ENCODE measurements at regions of chr10 and their contacts with region 1.

Region 1: DNA sequence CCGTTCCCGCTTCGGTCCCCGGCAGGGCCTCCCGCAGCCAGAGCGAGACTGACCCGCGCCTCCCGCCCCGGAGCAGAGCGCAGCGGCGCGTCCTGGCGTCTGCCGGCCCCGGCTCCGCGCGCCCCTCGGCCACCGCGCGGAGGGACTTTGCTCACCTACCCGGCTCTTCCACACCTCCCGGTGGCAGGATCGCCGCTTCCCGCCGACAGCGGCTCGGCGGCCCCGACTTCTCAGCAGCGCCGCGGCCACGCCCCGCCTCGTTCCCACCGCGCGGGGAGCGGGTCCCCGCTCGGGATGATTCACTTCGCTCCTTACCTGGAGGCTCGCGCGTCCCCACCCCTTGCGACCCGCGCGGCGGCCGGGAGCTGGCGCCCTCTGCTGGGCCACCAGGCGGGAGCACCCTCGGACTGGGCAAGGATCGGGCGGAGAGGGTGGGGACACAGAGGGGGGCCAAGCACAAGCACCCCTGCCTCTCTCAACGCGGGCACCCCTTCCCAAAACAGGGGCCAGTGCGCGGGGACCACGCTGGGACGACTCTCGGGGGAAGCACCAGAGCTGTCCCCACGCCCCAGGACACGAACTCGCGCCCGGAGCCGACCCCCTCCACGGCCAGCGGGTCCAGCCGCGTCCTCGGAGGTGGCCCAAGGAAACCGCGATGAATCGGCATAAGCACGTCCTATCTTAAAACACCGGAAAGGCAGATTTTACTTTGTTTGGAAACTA is 101.0 kb upstream of the SVIL start:
- DNase-seq: peak; percentile 97
- H3K4me3 ChIP-seq: peak overlapping the region; percentile 80 to 87 (median 84)
- H3K27ac ChIP-seq: peak overlapping the region; percentile 95 to 99 (median 98)
- H3K4me1 ChIP-seq: peaks cover 0 to 49% (median 33%) of the 10 kb centered on the region in 4 donors
- H3K27me3 ChIP-seq: no peaks in the 10 kb centered on the region
- CTCF ChIP-seq: peak; percentile 88 to 97 (median 96)
- EP300 ChIP-seq: no peak
- POLR2A ChIP-seq: peak; percentile 62

Region 2: GRCh38 chr10:29598851-29599311 is 136.9 kb before region 1 on chr10:
- intact Hi-C with region 1: loop called (anchors 10 kb)
- DNase-seq: no peak
- H3K4me3 ChIP-seq: peak overlapping the region in 2 of 4 donors; percentile 2 to 5
- H3K27ac ChIP-seq: peak overlapping the region; percentile 67 to 81 (median 76)
- H3K4me1 ChIP-seq: peaks cover 29 to 98% (median 97%) of the 10 kb centered on the region in 4 donors
- H3K27me3 ChIP-seq: no peaks in the 10 kb centered on the region
- CTCF ChIP-seq: no peak
- EP300 ChIP-seq: no peak
- POLR2A ChIP-seq: no peak

Region 3: GRCh38 chr10:29811751-29812449 is 76.1 kb after region 1 on chr10:
- intact Hi-C with region 1: loop called (anchors 5 kb)
- DNase-seq: no peak
- H3K4me3 ChIP-seq: peak overlapping the region; percentile 16 to 36 (median 22)
- H3K27ac ChIP-seq: peak overlapping the region; percentile 88 to 96 (median 92)
- H3K4me1 ChIP-seq: peaks cover 16 to 75% (median 60%) of the 10 kb centered on the region in 4 donors
- H3K27me3 ChIP-seq: no peaks in the 10 kb centered on the region
- CTCF ChIP-seq: no peak
- EP300 ChIP-seq: peak; percentile 78
- POLR2A ChIP-seq: no peak

Region 4: DNA sequence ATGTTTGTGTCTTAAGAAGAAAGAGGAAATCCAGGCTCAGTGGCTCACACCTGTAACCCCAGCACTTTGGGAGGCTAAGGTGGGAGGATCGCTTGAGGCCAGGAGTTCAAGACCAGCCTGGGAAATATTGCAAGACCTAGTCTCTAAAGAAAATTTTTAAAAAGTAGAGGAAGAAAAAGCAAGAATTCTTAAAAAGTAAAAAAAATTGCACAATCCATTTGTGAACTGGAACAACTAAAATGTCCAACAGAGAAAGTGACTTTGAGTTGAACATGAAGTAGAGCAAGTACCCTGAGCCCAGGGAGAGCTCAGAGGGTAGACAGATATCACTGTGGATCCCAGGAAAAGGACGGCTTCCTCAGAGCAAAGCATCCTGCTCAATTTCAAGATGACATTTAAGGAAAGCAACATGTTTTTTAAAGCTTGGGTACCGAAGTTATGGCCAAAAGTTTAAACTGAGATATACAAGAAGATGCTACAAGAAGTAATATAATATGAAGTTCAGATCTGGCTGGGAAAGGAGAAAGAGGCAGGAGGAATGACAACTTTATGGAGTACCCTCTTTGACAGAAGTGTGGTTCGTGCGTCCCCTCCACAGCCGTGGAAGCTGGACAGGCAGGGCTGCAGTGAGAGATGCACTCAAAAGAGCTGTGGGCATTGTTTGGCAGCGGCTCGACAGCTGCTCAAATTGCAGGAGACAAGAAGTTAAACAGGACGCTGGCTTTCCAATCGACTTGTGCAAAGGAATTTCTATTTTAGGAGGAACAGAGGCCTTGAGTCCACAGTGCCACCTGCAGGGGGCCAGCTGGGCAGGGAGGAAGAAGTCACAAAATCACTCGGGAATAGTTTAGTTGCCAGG is 122.3 kb after region 1 on chr10:
- intact Hi-C with region 1: loop called (anchors 2 kb)
- DNase-seq: no peak
- H3K4me3 ChIP-seq: peak overlapping the region in 2 of 4 donors; percentile 4 to 30
- H3K27ac ChIP-seq: peak overlapping the region; percentile 69 to 81 (median 71)
- H3K4me1 ChIP-seq: peaks cover 6 to 41% (median 38%) of the 10 kb centered on the region in 4 donors
- H3K27me3 ChIP-seq: no peaks in the 10 kb centered on the region
- CTCF ChIP-seq: peak; percentile 75 to 87 (median 81)
- EP300 ChIP-seq: no peak
- POLR2A ChIP-seq: no peak

Region 5: GRCh38 chr10:29998142-29998808 is 262.5 kb after region 1 on chr10:
- intact Hi-C with region 1: loop called (anchors 10 kb)
- DNase-seq: no peak
- H3K4me3 ChIP-seq: no peak overlapping the region
- H3K27ac ChIP-seq: no peak overlapping the region
- H3K4me1 ChIP-seq: peaks cover 26 to 79% (median 68%) of the 10 kb centered on the region in 4 donors
- H3K27me3 ChIP-seq: no peaks in the 10 kb centered on the region
- CTCF ChIP-seq: peak; percentile 95 to 98 (median 96)
- EP300 ChIP-seq: no peak
- POLR2A ChIP-seq: no peak

Measured in esophagus muscularis mucosa (tissue), 4 donors.